AG04449 (cell line): ENCODE measurements at regions of chr18 and their contacts with region 1.

Region 1: DNA sequence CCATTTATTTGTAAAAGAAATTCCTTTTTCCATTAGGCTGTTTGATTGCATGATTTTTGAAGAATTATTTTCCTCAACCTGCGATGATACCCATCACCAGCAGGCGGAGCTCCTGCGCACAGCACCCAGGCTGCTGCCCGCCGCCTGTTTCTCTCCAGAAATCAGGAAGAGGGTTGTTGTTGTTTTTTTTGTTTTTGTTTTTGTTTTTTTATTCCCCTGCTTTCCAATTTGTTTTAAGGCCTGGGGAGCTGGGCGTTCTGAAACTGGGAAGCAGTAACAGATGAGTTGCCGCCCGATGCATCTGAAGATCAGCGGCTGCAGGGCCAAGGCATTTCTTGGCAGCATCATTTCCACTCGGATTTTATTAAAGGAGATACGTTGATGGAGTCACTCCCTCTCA is 132.1 kb downstream of the MBP start:
- DNase-seq: no peak
- H3K4me3 ChIP-seq: peak overlapping the region; percentile 10
- CTCF ChIP-seq: peak; percentile 86

Region 2: GRCh38 chr18:76892832-76893231 is 107.7 kb before region 1 on chr18:
- CTCF ChIA-PET with region 1: no interaction called
- POLR2A ChIA-PET with region 1: no interaction called
- DNase-seq: no peak
- H3K4me3 ChIP-seq: no peak overlapping the region
- CTCF ChIP-seq: no peak

Region 3: GRCh38 chr18:76903386-76903785 is 97.1 kb before region 1 on chr18:
- CTCF ChIA-PET with region 1: no interaction called
- POLR2A ChIA-PET with region 1: no interaction called
- DNase-seq: no peak
- H3K4me3 ChIP-seq: no peak overlapping the region
- CTCF ChIP-seq: no peak

Region 4: DNA sequence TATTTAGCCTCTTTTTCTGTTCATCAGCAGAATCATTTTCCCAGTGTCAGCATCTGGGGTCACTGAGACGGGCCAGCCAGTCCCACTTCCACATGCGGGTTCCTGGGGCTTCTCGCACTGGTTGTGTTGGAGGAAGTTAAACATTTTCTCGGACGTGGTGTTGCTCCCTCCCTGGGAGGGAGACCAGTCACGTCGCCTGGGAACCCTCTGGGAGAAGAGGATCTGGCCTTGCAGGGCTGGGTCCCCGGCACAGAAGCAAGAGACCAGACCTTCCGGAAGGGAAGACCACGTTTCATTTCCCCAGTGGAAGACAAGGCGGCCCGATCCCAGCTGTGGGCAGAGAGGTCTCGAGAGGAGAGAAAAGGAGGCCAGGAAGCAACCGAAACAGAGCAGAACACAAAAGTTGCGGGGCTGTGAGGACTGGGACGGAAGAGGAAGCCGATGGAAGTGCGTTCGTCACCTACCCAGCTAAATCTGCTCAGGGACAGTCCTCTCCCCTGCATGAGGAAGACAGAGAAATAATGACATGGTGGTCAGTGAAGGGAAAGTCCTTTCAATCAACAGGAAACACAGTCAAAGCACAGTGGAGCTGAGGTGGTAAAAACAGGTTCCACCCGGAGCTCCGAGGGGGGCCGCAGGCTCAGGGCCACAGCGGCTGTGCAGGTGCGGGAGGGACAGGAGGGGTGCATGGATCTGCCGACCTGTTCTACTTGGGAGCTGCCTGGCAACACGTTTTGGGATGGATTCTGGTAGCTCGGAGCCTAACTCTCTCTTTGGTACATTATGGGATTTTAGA is 12.3 kb before region 1 on chr18:
- CTCF ChIA-PET with region 1: interaction called, 84 read pairs
- POLR2A ChIA-PET with region 1: no interaction called
- DNase-seq: no peak
- H3K4me3 ChIP-seq: no peak overlapping the region
- CTCF ChIP-seq: no peak

Region 5: GRCh38 chr18:77054606-77055428 is 54.3 kb after region 1 on chr18:
- CTCF ChIA-PET with region 1: interaction called, 23 read pairs
- POLR2A ChIA-PET with region 1: no interaction called
- DNase-seq: no peak
- H3K4me3 ChIP-seq: no peak overlapping the region
- CTCF ChIP-seq: peak; percentile 81

Region 6: GRCh38 chr18:77207540-77207939 is 207.0 kb after region 1 on chr18:
- CTCF ChIA-PET with region 1: interaction called, 268 read pairs
- POLR2A ChIA-PET with region 1: no interaction called
- DNase-seq: peak; percentile 24
- H3K4me3 ChIP-seq: no peak overlapping the region
- CTCF ChIP-seq: peak; percentile 82